Cardiac septum (tissue), 1 donor: ENCODE measurements at regions of chr5 and their contacts with region 1.

Region 1: DNA sequence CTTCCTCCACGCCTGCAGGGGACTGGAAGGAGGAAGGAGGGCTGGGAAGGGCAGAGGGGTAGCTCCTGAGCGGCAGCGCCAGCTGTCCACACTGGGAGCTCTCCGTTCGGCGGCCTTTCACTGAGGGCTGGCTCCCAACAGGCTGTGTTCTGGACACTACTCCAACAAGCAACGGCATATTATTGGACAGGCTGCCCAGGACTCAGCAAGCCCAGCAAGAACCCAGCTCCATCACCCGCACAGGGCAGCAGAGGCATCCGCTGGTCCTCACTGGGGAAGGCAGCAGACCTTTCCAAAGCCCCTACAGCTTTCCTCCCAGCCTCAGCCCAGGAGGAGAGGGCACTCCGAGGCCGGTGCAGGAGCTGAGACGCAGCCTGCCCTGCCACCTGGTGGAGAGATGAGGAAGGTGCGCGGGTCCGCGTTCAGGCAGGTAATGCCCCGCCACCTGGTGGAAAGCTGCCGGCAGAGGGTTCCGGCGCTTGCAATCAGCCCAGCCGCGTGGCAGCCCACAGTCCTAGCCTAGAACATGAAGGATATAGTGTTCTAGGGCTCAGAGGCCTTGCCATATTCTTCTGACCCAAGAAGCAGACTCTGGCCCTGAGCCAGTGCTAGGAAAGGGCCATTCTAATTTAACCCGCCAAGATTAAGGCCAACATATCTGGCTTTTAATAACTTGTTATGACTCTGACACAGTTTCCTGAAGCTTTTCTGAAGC is 74.4 kb downstream of the NRG2 start:
- DNase-seq: peak; percentile 93

Region 2: DNA sequence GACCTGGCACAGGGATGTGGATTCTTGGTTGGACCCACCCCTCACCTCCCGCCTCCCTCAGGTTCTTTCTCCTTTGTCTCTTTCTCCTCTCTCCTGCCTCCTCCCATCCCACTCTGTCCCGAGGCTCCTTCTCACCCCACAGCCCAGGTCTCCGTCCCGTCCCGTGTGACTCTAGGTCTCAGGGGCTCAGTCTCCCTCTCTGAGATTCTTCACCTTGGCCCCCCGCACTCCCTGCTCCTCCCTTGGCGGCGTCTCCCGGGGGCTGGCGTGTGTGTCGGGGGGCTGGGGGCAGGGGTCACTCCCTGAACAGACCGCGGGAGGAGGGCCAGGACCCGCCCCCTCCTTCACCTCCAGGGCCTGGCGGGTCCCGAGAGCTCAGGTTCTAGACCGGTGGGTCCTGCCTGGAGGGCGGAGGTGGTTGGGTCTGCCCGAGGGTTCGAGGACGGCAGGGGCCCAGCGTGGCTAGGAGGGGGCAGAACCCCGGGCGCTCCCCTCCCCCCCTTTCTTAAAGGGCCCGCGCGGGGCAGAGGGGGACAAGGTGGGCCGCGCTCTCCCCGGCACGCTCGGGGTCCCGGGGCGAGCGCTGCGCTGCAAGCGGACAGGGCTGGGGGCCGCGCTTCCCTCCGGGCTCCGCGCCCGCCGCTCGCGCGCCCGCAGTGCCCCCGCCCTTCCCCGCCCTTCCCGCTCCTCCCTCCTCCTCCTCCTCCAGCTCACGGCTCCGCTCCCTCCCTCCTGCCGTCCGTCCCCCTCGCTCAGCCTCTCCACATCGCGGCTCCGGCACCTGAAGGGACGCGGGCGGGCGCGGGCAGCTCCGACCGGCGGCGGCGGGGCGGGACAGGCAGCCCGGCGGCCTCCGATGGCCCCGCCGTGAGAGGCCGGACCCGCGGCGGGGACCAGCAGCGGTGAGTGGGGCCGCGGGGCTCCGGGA is 173.4 kb before region 1 on chr5 and contains the start of gene PSD2:
- intact Hi-C with region 1: no loop called
- DNase-seq: no peak
- total RNA-seq, gene PSD2: 0.08 TPM

Region 3: GRCh38 chr5:139863855-139864558 is 104.7 kb before region 1 on chr5:
- intact Hi-C with region 1: loop called (anchors 5 kb)
- DNase-seq: no peak

Region 4: GRCh38 chr5:139882961-139883539 is 85.7 kb before region 1 on chr5:
- intact Hi-C with region 1: loop called (anchors 5 kb)
- DNase-seq: no peak

Region 5: GRCh38 chr5:140145818-140146522 is 177.3 kb after region 1 on chr5:
- intact Hi-C with region 1: no loop called
- DNase-seq: peak; percentile 84

Region 6: GRCh38 chr5:140214831-140215230 is 246.1 kb after region 1 on chr5:
- intact Hi-C with region 1: no loop called
- DNase-seq: peak; percentile 79